Activated T-helper 1 cell treated with anti-CD3 and anti-CD28 coated beads, Interleukin-12 subunit alpha, Interleukin-12 subunit beta, Interleukin-2, Interleukin-4 antibody, amounts not matched to agents 30 ng/mL and 10 ng/mL and 1 ng/mL, durations not matched to agents 14 hours and 24 hours and 36 hours (primary cell): ENCODE measurements at regions of chr6 and their contacts with region 1.

Region 1: DNA sequence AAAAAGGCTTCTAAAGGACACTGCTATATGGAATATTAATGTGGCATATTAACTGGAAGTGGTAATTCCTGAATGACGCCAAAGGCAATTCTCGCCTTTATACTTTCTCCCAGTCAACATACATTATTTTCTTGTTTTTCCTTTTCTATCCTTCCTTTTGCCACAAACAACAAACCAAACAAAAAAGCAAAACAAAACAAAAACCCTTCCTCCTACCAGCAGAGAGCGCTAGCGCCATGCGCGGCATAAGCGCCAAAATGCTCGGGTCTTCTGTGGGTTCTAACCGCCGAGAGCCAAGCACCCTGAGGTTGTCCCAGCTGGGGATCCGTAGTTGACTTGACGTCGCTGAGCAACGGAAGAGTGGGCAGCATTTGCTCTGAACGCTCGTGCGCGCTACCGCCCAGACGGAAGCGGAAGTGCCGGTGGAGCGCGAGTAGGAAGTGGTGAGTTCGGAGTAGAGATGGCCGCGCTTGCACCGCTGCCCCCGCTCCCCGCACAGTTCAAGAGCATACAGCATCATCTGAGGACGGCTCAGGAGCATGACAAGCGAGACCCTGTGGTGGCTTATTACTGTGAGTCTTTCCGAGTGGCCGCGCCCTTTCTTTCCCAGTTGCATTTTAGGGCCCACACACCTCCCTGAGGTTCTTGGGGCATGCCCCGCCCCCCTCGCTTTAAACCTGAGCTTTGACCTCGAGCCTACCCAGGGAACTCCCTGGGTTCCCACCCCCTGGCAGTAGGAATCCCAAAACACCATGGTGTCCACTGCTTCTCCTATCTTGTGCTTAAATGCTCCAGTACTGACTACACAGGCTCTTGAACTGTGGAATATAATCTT is at the starts of genes NMBR and VTA1:
- DNase-seq: peak; percentile 95
- H3K4me3 Mint-ChIP-seq: peak within 1 kb of the TSS; percentile 90
- H3K27ac Mint-ChIP-seq: peak within 1 kb of the TSS; percentile 79
- H3K4me1 Mint-ChIP-seq: peaks cover 37% of the 10 kb centered on the region
- H3K27me3 Mint-ChIP-seq: no peaks in the 10 kb centered on the region
- total RNA-seq, gene NMBR: not detected in 2 replicates
- total RNA-seq, gene VTA1: 52.4 and 59.6 TPM in 2 replicates

Region 2: DNA sequence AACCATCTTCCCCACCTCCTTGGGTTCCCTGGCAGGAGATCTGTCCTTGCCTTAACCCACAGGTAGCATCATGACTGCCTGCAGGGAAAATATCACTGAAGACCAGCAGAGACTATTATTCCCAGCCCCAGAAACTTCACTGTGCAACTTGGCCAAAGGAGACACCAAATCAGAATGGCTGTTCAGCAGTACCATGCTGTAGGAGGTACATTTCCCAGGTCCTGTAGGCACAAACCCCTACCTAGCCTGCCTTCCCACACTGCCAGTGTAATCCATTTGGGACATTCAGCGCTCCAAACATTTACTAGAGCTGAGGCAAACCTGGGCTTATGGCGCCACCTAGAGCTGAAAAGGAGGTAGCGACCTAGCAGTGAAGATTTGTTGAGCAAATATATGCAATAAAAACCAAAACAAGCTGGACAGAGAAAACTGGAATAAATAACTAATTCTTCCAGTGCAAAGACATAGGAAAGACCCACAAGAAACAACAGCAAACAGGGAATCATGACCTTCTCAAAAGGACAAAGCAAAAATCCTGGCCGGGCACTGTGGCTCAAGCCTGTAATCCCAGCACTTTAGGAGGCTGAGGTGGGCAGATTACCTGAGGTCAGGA is 60.3 kb after region 1 on chr6:
- intact Hi-C with region 1: loop called (anchors 1 kb)
- DNase-seq: peak; percentile 6
- H3K4me3 Mint-ChIP-seq: no peak overlapping the region
- H3K27ac Mint-ChIP-seq: no peak overlapping the region
- H3K4me1 Mint-ChIP-seq: no peaks in the 10 kb centered on the region
- H3K27me3 Mint-ChIP-seq: no peaks in the 10 kb centered on the region

Region 3: GRCh38 chr6:142387997-142388815 is 241.2 kb after region 1 on chr6:
- intact Hi-C with region 1: loop called (anchors 1 kb)
- DNase-seq: no peak
- H3K4me3 Mint-ChIP-seq: no peak overlapping the region
- H3K27ac Mint-ChIP-seq: no peak overlapping the region
- H3K4me1 Mint-ChIP-seq: no peaks in the 10 kb centered on the region
- H3K27me3 Mint-ChIP-seq: peaks cover 46% of the 10 kb centered on the region

Region 4: GRCh38 chr6:142474531-142475289 is 327.7 kb after region 1 on chr6:
- intact Hi-C with region 1: loop called (anchors 5 kb)
- DNase-seq: no peak
- H3K4me3 Mint-ChIP-seq: no peak overlapping the region
- H3K27ac Mint-ChIP-seq: no peak overlapping the region
- H3K4me1 Mint-ChIP-seq: peaks cover 7% of the 10 kb centered on the region
- H3K27me3 Mint-ChIP-seq: peaks cover 7% of the 10 kb centered on the region

Region 5: GRCh38 chr6:142692942-142693341 is 545.9 kb after region 1 on chr6:
- intact Hi-C with region 1: loop called (anchors 5 kb)
- DNase-seq: peak; percentile 42
- H3K4me3 Mint-ChIP-seq: no peak overlapping the region
- H3K27ac Mint-ChIP-seq: no peak overlapping the region
- H3K4me1 Mint-ChIP-seq: peaks cover 22% of the 10 kb centered on the region
- H3K27me3 Mint-ChIP-seq: no peaks in the 10 kb centered on the region

Region 6: DNA sequence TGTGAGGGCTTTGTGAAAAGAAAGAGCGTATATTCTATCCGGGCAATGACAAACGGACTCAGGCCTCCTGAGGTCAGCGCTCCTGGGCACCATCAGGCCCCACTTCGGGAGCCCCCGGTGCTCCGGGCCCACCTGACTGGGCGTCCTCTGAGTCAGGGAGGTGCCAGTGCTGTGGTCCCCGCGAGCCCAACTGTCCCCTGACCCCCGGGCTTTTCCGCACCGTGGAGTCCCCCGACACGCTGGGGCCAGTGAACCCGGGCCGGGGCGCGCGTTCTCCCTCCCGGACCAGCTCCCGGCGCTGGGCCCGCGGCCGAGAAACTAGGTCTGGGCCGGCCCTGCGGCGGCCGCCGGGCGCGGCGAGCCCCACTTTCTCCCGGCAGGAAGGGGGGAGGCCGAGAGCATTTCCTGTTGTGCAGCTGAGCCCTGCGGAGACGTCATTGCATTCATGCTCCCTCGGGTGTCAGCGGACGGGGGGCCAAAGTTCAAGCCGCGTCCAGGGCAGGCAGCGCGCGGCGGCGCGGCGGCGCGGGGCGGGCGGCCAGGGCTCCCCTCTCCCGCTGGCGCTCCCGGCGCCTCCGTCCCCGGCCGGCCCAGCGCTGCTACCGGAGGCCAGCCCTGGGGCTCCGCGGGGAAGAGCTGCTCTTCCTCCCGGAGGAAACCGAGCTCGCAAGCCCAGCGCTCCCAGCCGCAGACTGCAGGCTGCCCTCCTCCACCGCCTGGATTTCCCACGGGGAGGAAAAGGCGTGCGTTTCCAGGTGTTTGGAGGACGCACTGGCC is 779.6 kb after region 1 on chr6:
- intact Hi-C with region 1: loop called (anchors 10 kb)
- DNase-seq: peak; percentile 76
- H3K4me3 Mint-ChIP-seq: peak overlapping the region; percentile 90
- H3K27ac Mint-ChIP-seq: peak overlapping the region; percentile 96
- H3K4me1 Mint-ChIP-seq: peaks cover 62% of the 10 kb centered on the region
- H3K27me3 Mint-ChIP-seq: no peaks in the 10 kb centered on the region

Region 7: GRCh38 chr6:143060354-143060805 is 913.3 kb after region 1 on chr6:
- intact Hi-C with region 1: loop called (anchors 2 kb)
- DNase-seq: peak; percentile 72
- H3K4me3 Mint-ChIP-seq: peak overlapping the region; percentile 90
- H3K27ac Mint-ChIP-seq: peak overlapping the region; percentile 94
- H3K4me1 Mint-ChIP-seq: peaks cover 28% of the 10 kb centered on the region
- H3K27me3 Mint-ChIP-seq: no peaks in the 10 kb centered on the region